ENCODE measurements at regions of chr1 and their contacts with region 1.

Region 1: GRCh38 chr1:211813590-211813989 is 17.0 kb downstream of the LPGAT1 start:
- DNase-seq: no peak
- H3K4me3 ChIP-seq: no peak overlapping the region
- H3K27me3 ChIP-seq: no peaks in the 10 kb centered on the region
- CTCF ChIP-seq: no peak

Region 2: DNA sequence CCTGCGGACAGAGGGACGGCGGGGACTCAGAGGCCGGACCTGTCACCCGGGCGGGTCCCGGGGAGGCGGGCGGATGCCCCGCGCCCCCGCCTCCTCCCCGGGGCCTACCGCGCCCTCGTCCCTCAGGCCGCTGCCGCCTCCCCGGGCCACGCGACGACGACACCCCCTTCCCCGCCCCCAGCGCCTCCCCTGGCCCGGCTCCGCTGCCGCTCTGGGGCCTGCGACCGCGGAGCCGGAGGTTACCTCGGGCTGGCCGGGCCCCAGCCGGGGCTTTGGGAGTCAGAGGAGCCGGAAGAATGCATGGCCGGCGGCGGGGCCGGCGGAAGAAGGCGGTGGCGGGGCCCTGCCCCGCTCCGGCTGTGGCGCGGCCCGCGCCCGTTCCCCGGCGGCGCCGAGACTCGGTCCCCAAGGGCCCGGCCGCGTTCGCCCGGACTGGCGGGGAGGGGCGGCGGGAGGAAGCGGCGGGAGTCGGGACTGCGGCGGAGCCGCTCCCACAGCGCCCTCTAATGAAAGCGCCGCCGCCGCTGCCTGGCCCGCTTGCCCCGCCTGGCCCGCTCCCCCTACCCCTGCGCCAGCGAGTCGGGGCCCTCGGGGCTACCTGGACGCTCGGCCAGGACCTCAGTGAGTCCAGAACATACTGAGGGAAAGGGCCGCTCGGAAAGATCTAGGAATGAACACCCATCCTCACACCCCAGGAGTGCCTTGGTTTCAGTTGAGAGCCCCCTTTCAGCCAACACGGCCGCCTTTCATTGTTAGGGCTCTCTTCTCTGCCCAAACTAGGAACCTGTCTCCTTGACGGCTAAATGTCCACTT is 16.9 kb after region 1 on chr1 and contains the start of gene LPGAT1:
- CTCF ChIA-PET with region 1: interaction called, 10 read pairs
- POLR2A ChIA-PET with region 1: no interaction called
- DNase-seq: no peak
- H3K4me3 ChIP-seq: peak within 1 kb of the TSS; percentile 68
- H3K27me3 ChIP-seq: no peaks in the 10 kb centered on the region
- CTCF ChIP-seq: peak; percentile 40
- polyA plus RNA-seq, gene LPGAT1: 7.7 and 14.4 TPM in 2 replicates

Measured in BJ (cell line).